ENCODE measurements at regions of chr2 and their contacts with region 1.

Region 1: DNA sequence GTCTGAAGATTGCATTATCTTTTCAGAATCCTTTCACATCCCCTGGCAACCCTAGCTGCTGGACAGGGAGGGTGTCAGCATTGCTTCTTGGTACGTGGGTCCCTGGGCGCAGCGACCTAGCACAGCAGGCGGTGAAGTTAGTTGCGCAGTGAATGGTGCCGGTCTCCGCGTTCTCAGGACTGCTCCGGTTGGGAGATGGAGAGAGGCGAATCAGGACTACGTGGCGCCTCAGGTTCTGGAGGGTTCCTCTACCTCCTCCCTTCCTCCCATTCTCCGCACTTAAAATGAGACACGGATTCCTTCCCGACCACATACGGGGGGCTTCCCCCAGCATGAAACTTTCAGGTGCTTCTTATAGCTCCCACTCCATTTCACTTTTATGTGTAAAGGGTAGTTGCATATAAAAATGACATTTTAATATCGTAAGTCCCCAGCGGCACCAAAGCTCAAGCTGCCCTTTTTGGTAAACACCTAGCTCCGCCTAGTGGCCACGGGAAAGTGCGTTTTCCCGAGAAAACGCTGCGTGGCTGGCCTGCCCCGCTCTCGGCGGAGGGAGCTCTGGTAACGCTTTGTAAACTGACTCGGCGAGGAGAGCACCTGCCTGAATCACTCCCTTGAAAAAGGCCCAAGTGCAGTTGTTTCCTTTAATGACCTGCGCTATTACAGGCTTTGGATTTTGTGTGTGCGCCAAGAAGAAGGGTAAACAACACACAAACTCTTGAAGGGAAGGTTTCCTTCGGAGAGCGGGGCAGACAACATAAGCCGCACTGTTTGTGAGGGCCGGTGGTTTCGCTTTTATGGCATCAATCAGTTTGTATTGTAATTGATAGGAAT is 32.9 kb upstream of the INHBB start:
- DNase-seq: peak; percentile 92

Region 2: GRCh38 chr2:120109186-120110061 is 203.7 kb before region 1 on chr2:
- intact Hi-C with region 1: loop called (anchors 5 kb)
- DNase-seq: no peak

Region 3: GRCh38 chr2:120223034-120223912 is 89.8 kb before region 1 on chr2 and contains the start of gene TMEM185B:
- intact Hi-C with region 1: loop called (anchors 5 kb)
- DNase-seq: peak; percentile 98
- total RNA-seq, gene TMEM185B: 22.7 TPM

Measured in cardiac septum (tissue), 1 donor.